ENCODE measurements at regions of chr13 and their contacts with region 1.

Region 1: DNA sequence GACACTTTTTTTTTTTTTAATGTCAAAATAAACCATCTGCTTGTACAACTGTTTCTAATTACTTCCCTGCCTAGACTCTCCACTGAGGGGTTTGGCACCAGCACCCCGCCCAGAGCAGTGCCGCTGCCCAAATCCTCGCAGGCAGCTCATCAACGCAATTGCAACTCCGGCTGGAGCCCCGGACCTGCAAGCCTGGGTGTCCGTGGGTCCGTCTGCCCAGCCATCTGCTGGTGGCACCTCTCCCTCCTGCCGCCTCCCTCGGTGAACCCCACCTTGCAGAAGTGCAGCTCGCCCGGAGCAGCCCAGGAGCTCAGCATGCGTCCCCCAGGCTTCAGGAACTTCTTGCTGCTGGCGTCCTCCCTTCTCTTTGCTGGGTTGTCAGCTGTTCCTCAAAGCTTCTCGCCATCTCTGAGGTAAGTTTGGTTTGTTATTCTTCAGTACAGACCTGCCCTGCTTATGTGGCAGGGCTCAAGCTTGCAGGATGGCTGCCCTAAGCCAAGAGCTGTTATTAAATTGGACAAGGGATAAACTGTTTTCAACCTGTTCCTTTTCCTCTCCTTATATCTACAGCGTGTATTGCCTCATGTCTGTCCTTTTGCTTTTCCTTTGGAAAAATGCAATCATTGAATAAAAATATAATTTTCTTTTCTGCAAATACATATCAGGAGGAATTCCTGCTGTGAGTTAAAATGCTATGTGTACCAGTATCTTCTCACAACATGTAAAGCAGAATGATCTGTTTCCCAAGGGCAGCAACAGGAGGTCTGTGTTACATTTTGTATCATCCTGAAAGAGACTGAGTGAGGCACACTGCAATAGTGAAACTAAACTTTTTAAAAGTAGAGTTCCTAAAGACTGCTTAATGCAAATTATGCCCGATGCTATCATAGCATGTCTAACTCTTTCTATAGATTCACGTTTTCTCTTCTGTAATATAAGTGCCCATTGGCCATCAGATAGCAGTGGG is at the start of gene ITGBL1:
- DNase-seq: peak; percentile 32 to 76
- H3K4me3 ChIP-seq: peak within 1 kb of the TSS; percentile 67 to 70
- H3K27ac ChIP-seq: peak within 1 kb of the TSS; percentile 84 to 85
- H3K4me1 ChIP-seq: peaks cover 0 to 69% (median 19%) of the 10 kb centered on the region in 4 donors
- H3K27me3 ChIP-seq: no peaks in the 10 kb centered on the region
- CTCF ChIP-seq: no peak

Region 2: DNA sequence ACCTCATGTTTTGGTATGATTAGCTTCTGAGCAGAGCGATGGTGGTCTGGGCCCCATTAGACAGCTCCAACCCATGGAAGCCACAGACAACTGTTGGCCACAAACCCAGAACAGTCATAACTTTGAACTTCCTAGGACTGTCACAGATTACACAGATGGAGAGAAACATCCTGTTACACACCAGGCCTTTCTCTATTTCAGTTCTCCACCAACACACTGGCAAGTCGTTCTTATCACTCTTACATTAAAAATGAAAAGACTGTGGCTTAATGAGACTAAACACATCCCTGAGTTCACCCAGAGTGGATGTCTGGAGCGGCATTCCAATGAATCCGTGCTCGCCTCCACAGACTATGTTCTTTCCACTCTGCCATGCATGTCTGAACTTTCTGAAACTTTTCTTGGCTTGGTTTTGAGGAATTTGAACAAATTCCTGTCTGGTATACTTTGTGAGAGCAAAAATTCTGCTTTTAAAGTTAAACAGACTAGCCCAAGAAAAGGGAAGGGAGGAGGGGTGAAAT is 145.6 kb before region 1 on chr13:
- intact Hi-C with region 1: loop called (anchors 10 kb)
- DNase-seq: no peak
- H3K4me3 ChIP-seq: no peak overlapping the region
- H3K27ac ChIP-seq: peak overlapping the region; percentile 46 to 72
- H3K4me1 ChIP-seq: peaks cover 0 to 61% (median 21%) of the 10 kb centered on the region in 4 donors
- H3K27me3 ChIP-seq: no peaks in the 10 kb centered on the region
- CTCF ChIP-seq: no peak

Region 3: GRCh38 chr13:101499406-101499805 is 46.6 kb after region 1 on chr13:
- intact Hi-C with region 1: no loop called
- DNase-seq: no peak
- H3K4me3 ChIP-seq: peak overlapping the region in 1 of 2 donors; percentile 28
- H3K27ac ChIP-seq: peak overlapping the region; percentile 66 to 69
- H3K4me1 ChIP-seq: peaks cover 0 to 33% (median 0%) of the 10 kb centered on the region in 4 donors
- H3K27me3 ChIP-seq: no peaks in the 10 kb centered on the region
- CTCF ChIP-seq: no peak